ENCODE measurements at regions of chr15 and their contacts with region 1.

Region 1: GRCh38 chr15:66497502-66498455 is at the start of gene SNAPC5:
- DNase-seq: peak; percentile 94
- CTCF ChIP-seq: peak; percentile 97

Region 2: DNA sequence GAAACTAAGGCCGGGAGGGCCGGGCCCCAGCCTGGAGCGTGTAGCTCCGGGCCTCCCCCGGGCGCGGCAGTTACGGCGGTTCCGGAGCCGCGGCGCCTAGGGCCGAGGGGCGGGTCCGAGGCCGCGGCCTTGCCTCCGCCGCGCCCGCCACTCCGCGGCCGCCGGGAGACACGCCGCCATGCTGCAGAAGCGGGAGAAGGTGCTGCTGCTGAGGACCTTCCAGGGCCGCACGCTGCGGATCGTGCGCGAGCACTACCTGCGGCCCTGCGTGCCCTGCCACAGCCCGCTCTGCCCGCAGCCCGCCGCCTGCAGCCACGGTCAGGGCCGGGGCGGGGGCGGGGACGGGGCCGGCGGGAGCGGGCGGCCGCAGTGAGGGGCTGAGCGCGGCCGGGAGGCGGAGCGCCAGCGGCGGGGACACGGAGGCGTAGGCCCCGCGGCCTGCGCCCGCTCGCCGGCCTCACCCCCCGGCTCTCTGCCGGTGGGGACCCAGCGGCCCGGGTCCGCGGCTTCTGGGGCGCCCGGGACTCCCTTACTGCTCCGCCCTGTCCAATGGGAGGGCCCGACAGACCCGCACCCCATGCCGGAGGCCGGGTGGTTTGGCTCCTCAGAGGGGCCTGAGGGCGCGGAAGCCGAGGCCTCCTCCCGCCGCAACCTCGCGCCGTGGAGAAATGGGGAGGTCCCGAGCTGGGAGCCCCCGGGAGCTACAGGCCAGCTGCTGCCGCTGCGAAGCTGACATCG is 204.2 kb before region 1 on chr15 and contains the start of gene DIS3L:
- CTCF ChIA-PET with region 1: interaction called, 28 read pairs
- POLR2A ChIA-PET with region 1: no interaction called
- DNase-seq: peak; percentile 85
- CTCF ChIP-seq: no peak

Region 3: GRCh38 chr15:66356345-66357236 is 141.2 kb before region 1 on chr15 and contains the start of gene TIPIN:
- CTCF ChIA-PET with region 1: interaction called, 18 read pairs
- POLR2A ChIA-PET with region 1: no interaction called
- DNase-seq: peak; percentile 97
- CTCF ChIP-seq: no peak

Region 4: DNA sequence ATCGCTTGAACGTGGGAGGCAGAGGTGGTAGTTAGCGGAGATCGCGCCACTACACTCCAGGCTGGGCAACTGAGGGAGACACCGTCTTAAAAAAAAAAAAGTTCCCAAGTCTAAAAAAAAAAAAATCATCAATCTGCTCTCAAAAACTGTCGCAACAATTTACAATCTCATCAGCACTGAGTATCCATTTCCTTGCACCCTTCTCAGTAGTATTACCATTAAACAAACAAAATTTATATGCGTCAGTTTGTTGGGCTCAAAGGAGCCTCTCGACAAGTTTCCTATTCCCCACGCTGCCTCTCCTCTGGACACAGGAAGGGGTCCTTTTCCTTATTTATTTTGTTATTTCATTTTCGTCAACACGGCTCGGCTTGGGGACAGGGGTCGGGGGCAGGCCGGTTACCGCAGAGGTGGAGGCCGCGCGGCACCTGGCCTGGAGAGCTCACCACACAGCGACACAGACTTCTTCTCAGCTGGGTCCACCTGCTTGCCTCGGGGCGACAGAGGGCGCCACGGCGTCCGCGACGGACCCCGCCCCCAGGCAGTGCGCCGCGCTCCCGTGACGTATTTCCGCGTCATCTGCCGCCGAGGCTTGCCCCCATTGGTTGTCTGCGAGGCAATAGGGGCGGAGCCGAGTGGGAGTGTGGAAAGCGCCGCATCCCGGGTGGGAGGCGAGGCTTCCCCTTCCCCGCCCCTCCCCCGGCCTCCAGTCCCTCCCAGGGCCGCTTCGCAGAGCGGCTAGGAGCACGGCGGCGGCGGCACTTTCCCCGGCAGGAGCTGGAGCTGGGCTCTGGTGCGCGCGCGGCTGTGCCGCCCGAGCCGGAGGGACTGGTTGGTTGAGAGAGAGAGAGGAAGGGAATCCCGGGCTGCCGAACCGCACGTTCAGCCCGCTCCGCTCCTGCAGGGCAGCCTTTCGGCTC is 111.3 kb before region 1 on chr15 and contains the start of gene MAP2K1:
- CTCF ChIA-PET with region 1: interaction called, 60 read pairs
- POLR2A ChIA-PET with region 1: interaction called, 17 read pairs
- DNase-seq: peak; percentile 96
- CTCF ChIP-seq: peak; percentile 75

Region 5: DNA sequence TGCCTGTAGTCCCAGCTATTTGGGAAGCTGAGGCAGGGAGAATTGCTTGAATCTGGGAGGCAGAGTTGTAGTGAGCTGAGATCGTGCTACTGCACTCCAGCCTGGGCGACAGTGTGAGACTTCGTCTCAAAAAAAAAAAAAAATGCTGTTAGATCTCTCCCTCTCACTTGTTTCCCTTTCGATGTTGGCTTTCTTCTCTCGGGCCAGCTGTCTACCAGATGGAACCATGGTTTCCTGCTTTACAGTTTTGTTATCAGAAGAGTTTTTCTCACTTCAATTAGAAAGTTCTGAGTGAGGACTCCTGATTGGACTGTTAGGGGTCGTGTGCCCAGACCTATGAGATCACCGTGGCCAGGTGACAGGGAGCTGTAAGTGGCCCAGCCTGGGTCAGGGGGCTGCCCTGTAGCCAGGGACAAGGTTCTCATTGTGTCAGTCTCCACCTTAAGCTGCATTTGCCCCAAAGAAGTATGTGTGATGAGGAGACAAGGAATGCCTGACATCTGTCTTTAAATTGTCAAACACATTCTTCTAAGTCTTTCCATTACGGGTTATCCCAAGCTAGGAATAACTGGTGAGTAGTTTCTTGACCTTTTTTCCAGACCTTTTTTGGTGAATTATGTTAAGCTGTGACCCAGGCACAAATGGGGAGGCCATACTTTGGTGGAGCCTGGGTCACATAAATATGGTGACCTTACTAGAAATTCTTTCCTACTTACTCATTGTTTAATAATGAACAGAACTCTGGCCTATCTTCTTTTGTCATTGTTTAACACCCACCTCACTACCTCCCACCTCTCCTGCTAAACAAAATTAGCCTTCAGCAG is 25.4 kb before region 1 on chr15:
- CTCF ChIA-PET with region 1: interaction called, 63 read pairs
- POLR2A ChIA-PET with region 1: interaction called, 6 read pairs
- DNase-seq: peak; percentile 81
- CTCF ChIP-seq: no peak

Measured in GM10248 (cell line).